HEK293 (cell line): ENCODE measurements at regions of chr5 and their contacts with region 1.

Region 1: GRCh38 chr5:102536323-102536928 is 37.6 kb upstream of the SLCO6A1 start:
- H3K4me3 ChIP-seq: no peak overlapping the region
- H3K27ac ChIP-seq: no peak overlapping the region
- H3K4me1 ChIP-seq: no peaks in the 10 kb centered on the region
- CTCF ChIP-seq: no peak

Region 2: DNA sequence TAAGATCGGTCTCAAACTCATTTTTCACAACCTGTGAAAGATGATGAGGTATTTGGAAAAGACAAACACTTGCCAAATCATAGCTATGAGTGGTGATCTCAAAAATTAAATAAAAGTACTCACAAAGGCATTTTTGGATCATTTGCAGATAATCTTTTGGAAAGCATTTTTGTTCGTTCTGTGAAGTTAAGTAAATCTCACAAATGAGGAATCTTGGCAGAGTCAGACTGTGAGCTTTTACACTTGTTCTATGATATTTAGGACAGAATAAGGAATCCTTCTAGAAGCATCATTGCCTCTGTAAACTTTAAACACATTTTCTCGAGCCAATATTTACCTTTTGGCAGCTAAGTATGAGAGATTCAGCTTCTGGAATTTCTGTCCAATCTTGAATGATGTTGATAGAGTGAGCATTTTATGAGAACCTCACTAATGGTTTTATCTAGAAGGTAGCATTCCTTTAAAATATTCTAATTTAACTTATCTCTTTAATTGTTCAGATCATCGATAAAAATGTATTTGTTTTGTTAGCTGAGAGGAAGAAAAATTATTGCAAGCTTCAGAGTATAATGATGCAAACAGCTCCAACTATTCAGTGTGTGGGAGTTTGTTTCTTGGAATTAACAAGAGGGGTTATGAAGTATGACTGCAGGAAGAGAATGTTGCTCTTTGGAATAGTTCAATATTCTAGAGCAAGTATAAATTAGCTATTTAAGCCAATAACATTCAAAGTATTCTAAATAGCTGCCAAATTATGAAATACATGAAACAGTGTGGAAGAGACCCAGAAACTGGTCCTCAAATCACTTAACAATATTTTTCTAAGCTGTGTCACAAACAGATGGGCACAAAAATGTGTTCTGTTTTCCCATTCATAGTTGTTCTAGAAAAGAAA is 11.0 kb after region 1 on chr5:
- CTCF ChIA-PET with region 1: interaction called, 11 read pairs
- POLR2A ChIA-PET with region 1: interaction called, 3 read pairs
- H3K4me3 ChIP-seq: no peak overlapping the region
- H3K27ac ChIP-seq: no peak overlapping the region
- H3K4me1 ChIP-seq: no peaks in the 10 kb centered on the region
- CTCF ChIP-seq: no peak

Region 3: GRCh38 chr5:102561894-102562760 is 25.7 kb after region 1 on chr5:
- CTCF ChIA-PET with region 1: interaction called, 15 read pairs
- POLR2A ChIA-PET with region 1: no interaction called
- H3K4me3 ChIP-seq: no peak overlapping the region
- H3K27ac ChIP-seq: no peak overlapping the region
- H3K4me1 ChIP-seq: no peaks in the 10 kb centered on the region
- CTCF ChIP-seq: 0 out of 2 replicates have a peak, but pooled peaks have one; percentile 12